SK-N-SH (cell line): ENCODE measurements at regions of chr19 and their contacts with region 1.

Region 1: GRCh38 chr19:46513461-46514236 is 18.0 kb upstream of the PNMA8B start:
- DNase-seq: peak; percentile 87
- H3K4me3 ChIP-seq: peak overlapping the region in 1 of 2 experiments; percentile 40; a peak in 1 of 4 replicates
- H3K27ac ChIP-seq: no peak overlapping the region
- H3K4me1 ChIP-seq: no peaks in the 10 kb centered on the region
- H3K27me3 ChIP-seq: no peaks in the 10 kb centered on the region; the same call in 1 of the 2 replicates
- CTCF ChIP-seq: peak; percentile 92
- EP300 ChIP-seq: no peak
- RAD21 ChIP-seq: peak; percentile 94

Region 2: DNA sequence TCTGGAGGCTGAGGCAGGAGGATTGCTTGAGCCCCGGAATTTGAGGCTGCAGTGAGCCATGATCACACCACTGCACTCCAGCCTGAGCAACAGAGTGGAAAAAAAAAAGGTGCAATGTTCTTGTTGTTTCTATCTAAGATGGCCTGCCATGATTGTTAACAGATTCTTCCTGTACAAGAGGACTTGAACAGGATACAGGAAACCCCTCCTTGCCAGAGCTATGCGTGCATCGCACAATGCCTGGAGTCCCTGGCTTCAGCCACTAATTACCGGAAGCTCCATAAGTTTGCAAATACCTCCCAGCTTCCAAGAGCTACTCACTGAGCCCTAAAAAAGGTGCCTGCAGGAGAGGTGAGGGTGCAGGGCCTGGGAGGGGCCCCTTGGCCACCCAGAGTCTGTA is 229.9 kb before region 1 on chr19:
- CTCF ChIA-PET with region 1: interaction called, 20 read pairs
- POLR2A ChIA-PET with region 1: no interaction called
- DNase-seq: no peak
- H3K4me3 ChIP-seq: no peak overlapping the region
- H3K27ac ChIP-seq: no peak overlapping the region
- H3K4me1 ChIP-seq: no peaks in the 10 kb centered on the region
- H3K27me3 ChIP-seq: no peaks in the 10 kb centered on the region; the same call in 1 of the 2 replicates
- CTCF ChIP-seq: no peak
- EP300 ChIP-seq: no peak
- RAD21 ChIP-seq: no peak

Region 3: DNA sequence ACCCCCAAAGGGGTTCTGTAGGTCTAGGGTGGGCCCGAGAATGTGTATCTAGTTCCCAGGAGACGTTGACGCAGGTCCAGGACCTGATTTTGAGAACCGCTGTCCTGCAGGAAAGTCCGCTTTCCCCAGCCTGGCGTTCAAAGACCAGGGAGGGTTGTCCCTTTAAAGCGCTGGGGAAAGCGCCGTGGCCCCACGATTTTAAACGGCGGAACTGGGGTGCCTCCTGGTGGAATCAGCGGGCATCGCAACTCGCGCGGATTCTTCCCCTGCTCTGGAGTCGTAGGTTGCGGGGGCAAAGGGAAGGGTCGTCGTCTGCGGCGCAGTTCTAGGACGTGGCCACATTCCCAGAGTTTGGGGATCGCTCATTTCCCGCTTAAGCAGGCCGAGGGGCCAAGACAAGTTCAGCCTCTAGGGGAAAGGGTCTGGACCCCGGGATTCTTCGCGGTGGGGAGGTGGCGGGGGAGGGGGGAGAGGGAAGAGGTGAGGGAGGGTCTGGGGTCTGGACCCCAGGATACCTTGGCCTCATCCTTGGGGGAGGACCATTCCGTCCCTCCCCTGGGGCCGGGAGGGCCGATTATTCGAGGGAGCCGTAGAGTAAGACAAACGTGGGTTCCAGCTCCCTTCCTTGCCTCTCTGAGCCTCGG is 25.7 kb before region 1 on chr19:
- CTCF ChIA-PET with region 1: interaction called, 25 read pairs
- POLR2A ChIA-PET with region 1: no interaction called
- DNase-seq: peak; percentile 89
- H3K4me3 ChIP-seq: peak overlapping the region; percentile 40 to 52
- H3K27ac ChIP-seq: no peak overlapping the region
- H3K4me1 ChIP-seq: peaks cover 0 to 14% of the 10 kb centered on the region in 2 experiments; a peak in 1 of 4 replicates
- H3K27me3 ChIP-seq: no peaks in the 10 kb centered on the region
- CTCF ChIP-seq: peak; percentile 88
- EP300 ChIP-seq: no peak
- RAD21 ChIP-seq: peak; percentile 96

Region 4: DNA sequence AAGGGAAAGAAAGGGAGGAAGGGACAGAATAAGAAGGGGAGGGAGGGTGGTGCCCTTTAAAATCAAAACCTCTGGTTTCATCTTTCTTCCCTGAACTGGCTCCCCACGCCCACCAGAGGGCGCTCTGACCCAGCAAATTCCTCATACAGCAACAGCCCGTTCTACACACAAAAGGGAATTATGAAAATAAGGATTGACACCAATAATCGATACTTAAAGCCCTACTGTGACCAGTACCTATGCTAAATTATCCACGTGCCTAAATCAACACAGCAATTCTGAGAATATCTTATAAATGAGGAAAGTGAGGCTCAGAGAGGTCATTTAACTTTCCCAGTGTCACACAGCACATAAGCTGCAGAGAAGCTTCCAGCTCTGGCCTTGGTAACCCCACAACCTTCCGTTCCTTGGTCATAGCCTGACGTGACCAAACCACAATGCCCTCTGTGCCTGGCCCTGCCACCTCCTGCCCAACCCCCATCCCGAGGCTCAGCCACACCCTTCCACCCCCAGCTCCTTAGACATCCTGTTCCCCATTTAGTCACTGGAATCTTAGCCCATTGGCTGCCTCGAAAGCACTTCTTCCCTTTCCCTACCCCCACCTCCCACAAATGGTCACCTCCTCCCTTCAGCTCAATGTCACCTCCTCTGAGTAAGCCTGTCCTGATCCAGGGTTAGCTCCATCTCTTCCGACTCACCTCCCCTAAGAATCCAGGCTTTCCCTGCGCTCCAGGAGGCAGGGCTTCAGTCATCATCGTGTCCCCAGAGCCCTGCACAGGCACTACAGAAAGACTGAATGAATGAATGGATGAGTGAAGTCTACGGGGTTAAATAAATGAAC is 16.2 kb after region 1 on chr19:
- CTCF ChIA-PET with region 1: interaction called, 102 read pairs
- POLR2A ChIA-PET with region 1: no interaction called
- DNase-seq: peak; percentile 81
- H3K4me3 ChIP-seq: peak overlapping the region in 1 of 2 experiments; percentile 35; a peak in 1 of 4 replicates
- H3K27ac ChIP-seq: no peak overlapping the region
- H3K4me1 ChIP-seq: peaks cover 0 to 28% of the 10 kb centered on the region in 2 experiments; a peak in 1 of 4 replicates
- H3K27me3 ChIP-seq: no peaks in the 10 kb centered on the region
- CTCF ChIP-seq: peak; percentile 88
- EP300 ChIP-seq: no peak
- RAD21 ChIP-seq: peak; percentile 95

Region 5: DNA sequence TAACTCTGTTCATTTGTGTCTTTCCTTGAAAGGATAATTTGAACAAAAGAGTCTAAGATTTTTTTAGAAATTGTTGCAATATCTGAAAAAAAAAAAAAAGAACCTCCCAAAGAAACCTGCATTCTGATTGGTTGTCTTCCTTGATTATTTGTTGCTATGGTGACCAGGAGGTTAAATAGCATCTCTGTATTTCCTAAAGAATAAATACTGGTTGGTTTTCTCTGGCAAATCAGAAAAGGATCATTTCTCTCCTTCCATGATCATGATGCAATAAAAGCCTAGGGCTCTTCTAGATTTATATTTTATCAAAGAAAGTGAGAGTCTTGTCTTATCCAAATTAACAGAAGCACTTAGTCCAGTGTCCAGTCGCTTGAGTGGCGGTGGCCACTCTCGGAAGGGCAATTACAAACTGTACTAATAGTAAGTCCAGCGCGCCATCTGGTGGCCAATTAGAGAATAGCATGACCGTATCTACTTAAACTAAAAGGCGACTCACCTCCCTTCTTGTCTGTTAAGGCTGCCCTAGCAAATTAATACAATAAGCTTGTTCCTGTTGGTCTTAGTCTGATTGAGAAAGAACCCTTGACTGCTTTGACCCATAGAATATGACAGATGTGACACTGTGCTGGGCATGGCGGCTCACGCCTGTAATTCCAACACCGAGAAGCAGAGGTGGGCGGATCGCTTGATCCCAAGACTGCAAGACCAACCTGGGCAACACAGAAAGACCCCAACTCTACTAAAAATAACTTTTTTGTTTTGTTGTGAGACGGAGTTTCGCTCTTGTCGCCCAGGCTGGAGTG is 29.0 kb after region 1 on chr19:
- CTCF ChIA-PET with region 1: interaction called, 59 read pairs
- POLR2A ChIA-PET with region 1: no interaction called
- DNase-seq: peak; percentile 77
- H3K4me3 ChIP-seq: peak overlapping the region in 1 of 2 experiments; percentile 45; a peak in 1 of 4 replicates
- H3K27ac ChIP-seq: no peak overlapping the region
- H3K4me1 ChIP-seq: no peaks in the 10 kb centered on the region; a peak in 1 of 4 replicates
- H3K27me3 ChIP-seq: no peaks in the 10 kb centered on the region
- CTCF ChIP-seq: peak; percentile 94
- EP300 ChIP-seq: no peak
- RAD21 ChIP-seq: peak; percentile 87